CD4-positive, alpha-beta memory T cell (primary cell): ENCODE measurements at regions of chr12 and their contacts with region 1.

Region 1: GRCh38 chr12:25386831-25387731 is 136.4 kb upstream of the KRAS start:
- DNase-seq: peak; percentile 78 to 86 (median 83)
- H3K4me3 ChIP-seq: peak overlapping the region; percentile 62 to 92
- H3K4me3 Mint-ChIP-seq: peak overlapping the region; percentile 94 to 100 (median 98)
- H3K27ac ChIP-seq: peak overlapping the region; percentile 98
- H3K27ac Mint-ChIP-seq: peak overlapping the region; percentile 99 to 100 (median 100)
- H3K4me1 ChIP-seq: peaks cover 40% of the 10 kb centered on the region
- H3K4me1 Mint-ChIP-seq: peaks cover 27 to 63% (median 42%) of the 10 kb centered on the region in 4 donors
- H3K27me3 ChIP-seq: no peaks in the 10 kb centered on the region
- H3K27me3 Mint-ChIP-seq: peaks cover 0 to 2% of the 10 kb centered on the region in 2 donors

Region 2: DNA sequence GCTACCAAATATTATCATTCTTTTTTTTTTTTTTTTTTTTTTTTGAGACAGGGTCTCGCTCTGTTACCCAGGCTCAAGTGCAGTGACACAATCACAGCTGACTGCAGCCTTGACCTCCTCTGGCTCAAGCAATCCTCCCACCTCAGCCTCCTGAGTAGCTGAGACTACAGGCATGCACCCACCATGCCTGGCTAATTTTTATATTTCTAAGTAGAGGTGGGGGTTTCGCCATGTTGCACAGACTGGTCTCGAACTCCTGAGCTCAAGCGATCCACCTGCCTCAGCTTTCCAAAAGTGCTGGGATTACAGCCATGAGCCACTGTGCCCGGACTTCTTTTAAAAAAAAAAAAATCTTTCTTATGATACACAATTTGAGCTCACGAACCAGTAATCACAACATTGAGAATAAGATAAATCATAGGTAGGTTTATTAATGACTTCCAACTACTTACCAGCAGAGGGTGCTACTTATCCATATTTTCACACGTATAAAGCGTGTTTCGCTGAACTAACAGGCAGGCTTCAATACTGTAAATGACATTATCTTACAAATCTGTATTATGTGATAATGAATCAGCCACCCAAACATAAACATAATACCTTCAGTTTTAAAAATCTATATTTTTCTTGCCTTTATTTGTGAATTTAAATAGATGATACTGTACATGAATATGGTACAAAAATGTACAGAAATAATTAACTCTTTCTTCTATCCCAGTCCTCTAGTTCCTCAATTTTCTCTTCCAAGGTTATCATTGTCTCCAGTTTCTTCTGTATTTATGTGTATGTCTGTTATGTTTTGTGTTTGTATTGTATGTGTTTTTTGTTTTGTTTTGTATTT is 395.7 kb before region 1 on chr12:
- CTCF ChIA-PET with region 1: interaction called, 11 read pairs
- POLR2A ChIA-PET with region 1: no interaction called
- intact Hi-C with region 1: loop called (anchors 1 kb)
- DNase-seq: peak; percentile 41 to 71 (median 67)
- H3K4me3 ChIP-seq: no peak overlapping the region
- H3K4me3 Mint-ChIP-seq: no peak overlapping the region
- H3K27ac ChIP-seq: no peak overlapping the region
- H3K27ac Mint-ChIP-seq: peak overlapping the region in 1 of 7 donors; percentile 61
- H3K4me1 ChIP-seq: no peaks in the 10 kb centered on the region
- H3K4me1 Mint-ChIP-seq: no peaks in the 10 kb centered on the region
- H3K27me3 ChIP-seq: no peaks in the 10 kb centered on the region
- H3K27me3 Mint-ChIP-seq: peaks cover 0 to 2% of the 10 kb centered on the region in 2 donors

Region 3: GRCh38 chr12:25195056-25195971 is 191.8 kb before region 1 on chr12 and contains the starts of genes DNAI7 and ETFRF1:
- CTCF ChIA-PET with region 1: no interaction called
- POLR2A ChIA-PET with region 1: interaction called, 12 read pairs
- intact Hi-C with region 1: no loop called
- DNase-seq: peak; percentile 93 to 97 (median 95)
- H3K4me3 ChIP-seq: peak within 1 kb of the TSS; percentile 73 to 98
- H3K4me3 Mint-ChIP-seq: peak within 1 kb of the TSS; percentile 96 to 99 (median 99)
- H3K27ac ChIP-seq: peak within 1 kb of the TSS; percentile 83
- H3K27ac Mint-ChIP-seq: peak within 1 kb of the TSS; percentile 97 to 100 (median 99)
- H3K4me1 ChIP-seq: peaks cover 24% of the 10 kb centered on the region
- H3K4me1 Mint-ChIP-seq: peaks cover 16 to 35% (median 25%) of the 10 kb centered on the region in 4 donors
- H3K27me3 ChIP-seq: no peaks in the 10 kb centered on the region
- H3K27me3 Mint-ChIP-seq: no peaks in the 10 kb centered on the region
- total RNA-seq, gene DNAI7: 0.15 TPM in 1 of 2 experiments, not detected in the other
- total RNA-seq, gene ETFRF1: 22.1 to 23.0 TPM

Region 4: DNA sequence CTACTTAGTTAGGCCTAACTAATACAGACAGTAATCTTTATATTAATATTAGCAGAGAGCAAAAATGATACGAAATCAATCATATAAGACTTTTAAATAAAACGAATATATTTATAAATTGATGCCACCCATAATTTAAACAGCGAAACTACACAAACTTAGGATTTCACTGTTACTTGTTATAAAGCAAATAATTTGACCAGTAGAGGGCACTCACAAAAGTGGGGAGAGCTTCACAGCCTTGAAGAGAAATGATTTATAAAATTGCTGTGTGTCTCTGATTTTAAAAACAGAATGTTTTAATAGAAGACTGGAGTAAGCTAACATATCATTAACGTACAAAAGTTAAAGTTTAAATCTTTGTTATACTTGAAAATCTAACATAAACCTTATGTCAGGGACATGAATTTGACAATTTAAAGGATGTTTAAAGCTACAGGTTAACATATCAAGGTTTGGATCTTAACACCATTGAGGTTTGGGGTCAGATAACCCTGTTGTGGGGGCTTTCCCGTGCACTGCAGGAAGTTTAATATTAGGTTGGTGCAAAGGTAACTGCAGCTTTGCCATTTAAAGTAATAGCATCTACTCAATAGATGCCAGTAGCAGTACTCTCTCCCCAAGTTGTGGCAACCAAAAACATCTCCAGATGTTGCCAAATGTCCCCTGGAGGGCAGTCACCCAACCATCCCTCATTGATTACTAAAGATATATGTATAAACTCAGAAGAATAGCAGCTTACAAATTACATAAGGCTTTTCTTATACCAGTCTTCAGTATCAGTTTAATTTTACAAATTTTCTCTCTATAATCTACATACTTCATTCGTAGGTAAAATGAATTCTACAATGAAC is 145.7 kb before region 1 on chr12:
- CTCF ChIA-PET with region 1: no interaction called
- POLR2A ChIA-PET with region 1: interaction called, 14 read pairs
- intact Hi-C with region 1: loop called (anchors 1 kb)
- DNase-seq: peak; percentile 57 to 67 (median 63)
- H3K4me3 ChIP-seq: no peak overlapping the region
- H3K4me3 Mint-ChIP-seq: no peak overlapping the region
- H3K27ac ChIP-seq: peak overlapping the region; percentile 22
- H3K27ac Mint-ChIP-seq: peak overlapping the region; percentile 4 to 86 (median 66)
- H3K4me1 ChIP-seq: peaks cover 14% of the 10 kb centered on the region
- H3K4me1 Mint-ChIP-seq: peaks cover 13 to 52% (median 31%) of the 10 kb centered on the region in 4 donors
- H3K27me3 ChIP-seq: no peaks in the 10 kb centered on the region
- H3K27me3 Mint-ChIP-seq: no peaks in the 10 kb centered on the region

Region 5: DNA sequence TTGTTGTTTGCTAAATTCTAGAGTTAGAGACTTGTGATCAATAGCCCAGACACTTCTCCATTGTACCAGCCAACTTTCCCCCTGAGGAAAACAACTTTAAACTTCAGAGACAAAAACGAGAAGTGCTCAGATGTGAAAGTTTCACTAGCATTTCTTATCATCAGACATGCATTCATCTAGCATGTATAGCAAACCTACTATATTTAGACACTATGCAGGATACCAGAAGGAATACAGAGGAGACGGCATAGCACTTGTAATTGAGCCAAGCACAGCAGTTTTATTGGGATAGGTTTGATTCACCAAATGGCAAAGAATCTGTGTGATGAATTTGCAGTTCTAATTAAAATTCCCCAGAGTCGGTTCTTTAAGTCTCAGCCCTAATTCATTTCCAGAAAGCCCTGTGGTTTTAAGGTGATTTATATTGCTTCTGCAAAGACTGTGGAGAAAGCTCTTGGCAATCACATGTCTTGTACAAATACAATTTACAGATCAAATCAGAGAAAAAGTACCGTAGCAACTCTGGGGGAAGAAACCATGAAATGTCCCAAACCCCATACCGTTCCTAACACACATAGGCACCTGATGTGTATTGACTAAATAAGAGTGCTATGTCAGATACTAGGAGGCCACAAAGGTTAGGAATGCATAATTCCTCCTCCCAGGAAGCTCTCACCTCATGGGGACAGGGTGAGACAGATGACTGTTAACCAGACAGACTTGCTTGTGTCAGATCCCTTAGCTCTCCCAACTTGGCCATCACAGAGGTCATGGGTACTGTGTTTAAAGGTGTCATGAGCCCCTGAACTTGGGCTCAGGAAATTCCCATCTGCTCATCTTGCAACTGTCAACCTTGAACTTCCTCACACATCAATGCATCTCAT is 66.7 kb before region 1 on chr12:
- CTCF ChIA-PET with region 1: no interaction called
- POLR2A ChIA-PET with region 1: interaction called, 10 read pairs
- intact Hi-C with region 1: no loop called
- DNase-seq: no peak
- H3K4me3 ChIP-seq: no peak overlapping the region
- H3K4me3 Mint-ChIP-seq: no peak overlapping the region
- H3K27ac ChIP-seq: no peak overlapping the region
- H3K27ac Mint-ChIP-seq: peak overlapping the region in 1 of 7 donors; percentile 6
- H3K4me1 ChIP-seq: peaks cover 30% of the 10 kb centered on the region
- H3K4me1 Mint-ChIP-seq: peaks cover 33 to 44% (median 37%) of the 10 kb centered on the region in 4 donors
- H3K27me3 ChIP-seq: no peaks in the 10 kb centered on the region
- H3K27me3 Mint-ChIP-seq: no peaks in the 10 kb centered on the region